Ovary (tissue), 10 donors: ENCODE measurements at regions of chr17 and their contacts with region 1.

Region 1: DNA sequence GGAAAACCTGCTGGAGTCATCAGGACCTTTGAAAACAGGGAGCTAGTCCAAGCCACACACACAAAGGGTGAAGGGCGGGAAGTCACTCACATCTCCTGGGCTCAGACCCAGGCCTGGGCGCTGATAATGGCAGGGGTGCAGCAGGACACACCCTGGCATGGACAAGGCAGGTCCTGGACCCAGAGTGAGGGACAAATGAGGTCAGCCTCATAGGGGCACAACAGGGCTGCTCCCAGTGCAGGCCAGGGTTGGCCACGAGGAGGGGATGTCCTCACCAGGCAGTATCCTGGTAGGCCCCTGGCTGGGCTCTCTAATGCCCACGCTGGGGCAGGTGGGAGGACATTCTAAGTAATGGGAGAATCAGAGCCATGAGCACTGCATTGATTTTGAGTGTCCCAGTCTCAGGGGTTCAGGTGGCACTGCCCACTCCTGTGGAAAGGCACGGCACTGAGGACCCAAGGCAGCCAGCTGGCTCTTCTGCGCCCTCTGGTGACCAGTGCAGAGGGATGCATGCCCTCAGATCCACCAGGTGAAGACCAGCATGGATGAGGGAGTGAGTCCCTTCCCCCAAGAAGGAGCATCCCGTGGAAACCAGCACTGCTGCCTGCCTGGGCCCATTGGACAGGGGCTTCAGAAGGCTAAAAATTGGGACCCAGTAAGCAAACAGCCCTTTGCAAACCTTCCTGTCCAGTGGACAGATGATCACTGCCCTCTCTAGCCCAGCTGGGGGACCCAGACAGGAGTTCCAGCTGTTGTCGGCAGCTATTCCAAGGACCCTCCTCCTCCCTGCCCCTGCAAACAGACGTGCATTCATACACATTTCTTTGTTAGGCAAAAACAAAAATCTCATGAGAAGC is 23.4 kb upstream of the SREBF1 start:
- DNase-seq: peak; percentile 66 to 79 (median 77)
- H3K4me3 ChIP-seq: no peak overlapping the region
- H3K27ac ChIP-seq: no peak overlapping the region
- H3K4me1 ChIP-seq: peaks cover 4% of the 10 kb centered on the region
- H3K27me3 ChIP-seq: no peaks in the 10 kb centered on the region
- CTCF ChIP-seq: peak; percentile 93 to 96 (median 96)
- EP300 ChIP-seq: no peak
- POLR2A ChIP-seq: no peak

Region 2: GRCh38 chr17:17919169-17920107 is 59.3 kb after region 1 on chr17:
- intact Hi-C with region 1: loop called in 1 of 4 experiments (anchors 10 kb)
- DNase-seq: peak; percentile 68 to 80 (median 72)
- H3K4me3 ChIP-seq: no peak overlapping the region
- H3K27ac ChIP-seq: no peak overlapping the region
- H3K4me1 ChIP-seq: peaks cover 11% of the 10 kb centered on the region
- H3K27me3 ChIP-seq: no peaks in the 10 kb centered on the region
- CTCF ChIP-seq: peak in 2 of 3 donors; percentile 54 to 56
- EP300 ChIP-seq: no peak
- POLR2A ChIP-seq: no peak

Region 3: GRCh38 chr17:18038861-18039534 is 178.9 kb after region 1 on chr17 and contains the starts of genes ATPAF2 and GID4:
- intact Hi-C with region 1: loop called in 1 of 4 experiments (anchors 10 kb)
- DNase-seq: peak; percentile 99 to 100 (median 100)
- H3K4me3 ChIP-seq: peak within 1 kb of the TSS; percentile 91
- H3K27ac ChIP-seq: peak within 1 kb of the TSS; percentile 61 to 68
- H3K4me1 ChIP-seq: peaks cover 7% of the 10 kb centered on the region
- H3K27me3 ChIP-seq: no peaks in the 10 kb centered on the region
- CTCF ChIP-seq: peak in 1 of 3 donors; percentile 24
- EP300 ChIP-seq: no peak
- POLR2A ChIP-seq: peak; percentile 18
- total RNA-seq, gene ATPAF2: 5.5 to 18.6 (median 15.5) TPM
- total RNA-seq, gene GID4: 6.0 to 13.2 (median 11.2) TPM